Heart left ventricle (tissue), 16 donors: ENCODE measurements at regions of chrX and their contacts with region 1.

Region 1: GRCh38 chrX:40013266-40014195 is 84.2 kb downstream of the BCOR start:
- DNase-seq: peak; percentile 76 to 81 (median 78)
- ATAC-seq: peak; percentile 60 to 80 (median 68)
- H3K4me3 ChIP-seq: peak overlapping the region; percentile 11 to 80 (median 59)
- H3K27ac ChIP-seq: peak overlapping the region; percentile 88 to 98 (median 94)
- H3K4me1 ChIP-seq: peaks cover 0 to 57% (median 16%) of the 10 kb centered on the region in 12 donors
- H3K27me3 ChIP-seq: peaks cover 0 to 71% (median 0%) of the 10 kb centered on the region in 9 donors
- CTCF ChIP-seq: peak in 1 of 12 donors; percentile 11
- POLR2A ChIP-seq: no peak

Region 2: GRCh38 chrX:39730662-39731397 is 282.7 kb before region 1 on chrX:
- intact Hi-C with region 1: loop called in 1 of 10 experiments (anchors 10 kb)
- DNase-seq: peak; percentile 64 to 78 (median 77)
- ATAC-seq: peak; percentile 69 to 90 (median 82)
- H3K4me3 ChIP-seq: no peak overlapping the region
- H3K27ac ChIP-seq: peak overlapping the region in 5 of 12 donors; percentile 34 to 48 (median 38)
- H3K4me1 ChIP-seq: peaks cover 0 to 29% (median 10%) of the 10 kb centered on the region in 12 donors
- H3K27me3 ChIP-seq: peaks cover 0 to 35% (median 0%) of the 10 kb centered on the region in 9 donors
- CTCF ChIP-seq: peak; percentile 36 to 71 (median 58)
- POLR2A ChIP-seq: no peak

Region 3: GRCh38 chrX:39896951-39897740 is 116.4 kb before region 1 on chrX:
- intact Hi-C with region 1: loop called in 3 of 10 experiments (anchors 5 to 10 kb)
- DNase-seq: peak in 3 of 5 donors; percentile 35 to 62 (median 49)
- ATAC-seq: peak; percentile 21 to 78 (median 77)
- H3K4me3 ChIP-seq: no peak overlapping the region
- H3K27ac ChIP-seq: peak overlapping the region in 5 of 12 donors; percentile 19 to 50 (median 42)
- H3K4me1 ChIP-seq: peaks cover 0 to 38% (median 9%) of the 10 kb centered on the region in 12 donors
- H3K27me3 ChIP-seq: peaks cover 0 to 17% (median 0%) of the 10 kb centered on the region in 9 donors
- CTCF ChIP-seq: peak in 4 of 12 donors; percentile 5 to 25 (median 17)
- POLR2A ChIP-seq: no peak

Region 4: GRCh38 chrX:39915081-39915480 is 98.5 kb before region 1 on chrX:
- intact Hi-C with region 1: no loop called
- DNase-seq: no peak
- ATAC-seq: no peak
- H3K4me3 ChIP-seq: no peak overlapping the region
- H3K27ac ChIP-seq: no peak overlapping the region
- H3K4me1 ChIP-seq: peaks cover 0 to 4% (median 0%) of the 10 kb centered on the region in 12 donors
- H3K27me3 ChIP-seq: peaks cover 0 to 9% (median 0%) of the 10 kb centered on the region in 9 donors
- CTCF ChIP-seq: no peak
- POLR2A ChIP-seq: no peak

Region 5: GRCh38 chrX:40083120-40083978 is 69.8 kb after region 1 on chrX:
- intact Hi-C with region 1: loop called in 4 of 10 experiments (anchors 5 to 10 kb)
- DNase-seq: no peak
- ATAC-seq: peak in 3 of 4 donors; percentile 34 to 59 (median 37)
- H3K4me3 ChIP-seq: peak overlapping the region in 10 of 12 donors; percentile 34 to 56 (median 45)
- H3K27ac ChIP-seq: no peak overlapping the region
- H3K4me1 ChIP-seq: peaks cover 0 to 47% (median 22%) of the 10 kb centered on the region in 12 donors
- H3K27me3 ChIP-seq: peaks cover 0 to 60% (median 0%) of the 10 kb centered on the region in 9 donors
- CTCF ChIP-seq: no peak
- POLR2A ChIP-seq: no peak

Region 6: DNA sequence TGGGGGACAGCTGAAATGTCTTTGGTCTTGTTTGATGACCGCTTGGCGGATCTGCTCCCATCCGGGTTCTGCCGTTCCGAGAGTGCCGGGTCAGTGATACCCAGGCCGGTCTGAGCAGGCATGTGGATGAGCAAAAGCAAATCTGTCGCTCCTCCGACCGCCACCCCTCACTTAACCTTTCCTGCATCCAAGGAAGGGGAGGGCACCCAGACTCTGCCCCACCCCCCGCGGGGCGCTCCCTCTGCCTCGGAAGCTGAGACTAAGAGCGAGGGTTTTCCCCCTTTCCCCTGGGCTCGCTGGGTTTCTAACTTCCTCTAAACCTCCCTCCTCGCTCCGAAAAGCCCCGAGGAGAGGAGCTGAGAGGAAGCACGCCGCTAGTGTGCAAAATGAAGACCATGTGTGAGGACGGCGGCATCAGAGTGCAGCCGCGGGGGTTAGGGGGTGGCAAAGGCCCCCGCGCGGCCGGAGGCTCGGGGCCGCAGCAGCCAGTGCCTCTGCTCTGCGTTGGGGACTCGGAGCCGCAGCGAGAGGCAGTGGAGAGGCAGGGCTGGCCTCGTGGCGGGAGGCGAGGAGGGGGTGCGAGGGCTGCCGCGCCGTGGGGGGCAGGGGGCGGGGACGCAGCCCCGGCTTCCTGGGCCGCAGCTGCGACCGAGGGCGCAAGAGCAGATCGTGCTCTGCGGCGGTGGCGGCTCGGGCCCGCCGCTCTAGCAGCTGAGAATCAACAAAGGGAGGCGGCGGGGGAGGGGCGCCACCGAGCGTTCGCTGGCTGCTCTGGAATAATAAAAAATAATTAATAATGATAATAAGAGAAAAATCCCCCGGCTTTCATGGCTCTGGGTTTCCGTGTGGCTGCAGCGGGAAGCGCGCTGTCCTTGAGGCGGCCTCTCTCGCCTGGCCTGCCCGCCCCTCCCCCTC is 140.1 kb after region 1 on chrX:
- intact Hi-C with region 1: loop called in 7 of 10 experiments (anchors 5 to 10 kb)
- DNase-seq: peak in 4 of 5 donors; percentile 37 to 70 (median 62)
- ATAC-seq: peak in 3 of 4 donors; percentile 3 to 22 (median 21)
- H3K4me3 ChIP-seq: peak overlapping the region; percentile 21 to 63 (median 50)
- H3K27ac ChIP-seq: peak overlapping the region; percentile 65 to 89 (median 81)
- H3K4me1 ChIP-seq: peaks cover 0 to 78% (median 29%) of the 10 kb centered on the region in 12 donors
- H3K27me3 ChIP-seq: peaks cover 0 to 96% (median 0%) of the 10 kb centered on the region in 9 donors
- CTCF ChIP-seq: peak in 6 of 12 donors; percentile 9 to 37 (median 27)
- POLR2A ChIP-seq: no peak

Region 7: GRCh38 chrX:40266490-40267333 is 253.2 kb after region 1 on chrX:
- intact Hi-C with region 1: loop called in 2 of 10 experiments (anchors 10 kb)
- DNase-seq: peak; percentile 67 to 84 (median 70)
- ATAC-seq: peak; percentile 84 to 92 (median 90)
- H3K4me3 ChIP-seq: peak overlapping the region; percentile 4 to 63 (median 50)
- H3K27ac ChIP-seq: peak overlapping the region in 11 of 12 donors; percentile 21 to 84 (median 60)
- H3K4me1 ChIP-seq: peaks cover 0 to 31% (median 13%) of the 10 kb centered on the region in 12 donors
- H3K27me3 ChIP-seq: peaks cover 0 to 11% (median 0%) of the 10 kb centered on the region in 9 donors
- CTCF ChIP-seq: peak; percentile 47 to 76 (median 61)
- POLR2A ChIP-seq: no peak